ENCODE measurements at regions of chr7 and their contacts with region 1.

Region 1: DNA sequence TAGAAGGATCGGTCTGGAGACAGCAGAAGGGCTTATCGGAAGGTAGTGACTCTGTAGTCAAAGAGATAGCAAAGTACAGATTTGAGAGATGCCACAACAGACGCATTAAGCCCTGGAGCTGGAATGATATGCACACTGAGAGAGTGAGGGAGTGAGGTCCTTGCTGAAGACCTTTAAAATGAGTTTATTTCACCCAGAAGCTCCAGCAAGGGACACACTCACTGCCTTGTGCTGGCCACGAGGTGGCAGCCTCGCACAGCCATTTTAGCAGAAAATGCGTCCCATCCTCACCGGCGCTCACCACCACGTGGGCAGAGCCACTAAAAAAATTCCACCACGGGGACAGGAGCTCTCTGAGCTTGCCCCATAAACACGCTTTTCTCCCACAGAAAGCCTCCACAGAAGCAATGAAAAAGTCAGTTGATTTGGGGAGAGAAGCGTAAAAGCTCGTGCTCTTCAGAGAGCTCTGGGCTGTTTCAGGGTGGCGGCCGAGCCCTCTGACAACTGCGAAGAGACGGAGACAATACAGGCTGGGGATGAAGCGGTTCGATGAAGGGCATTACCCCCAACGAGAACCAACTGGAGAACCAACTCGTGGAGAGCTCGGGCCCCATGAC is 163.0 kb upstream of the KLF14 start:
- DNase-seq: no peak
- H3K4me3 ChIP-seq: no peak overlapping the region
- CTCF ChIP-seq: peak; percentile 88

Region 2: GRCh38 chr7:130758429-130759056 is 138.5 kb before region 1 on chr7:
- CTCF ChIA-PET with region 1: no interaction called
- POLR2A ChIA-PET with region 1: no interaction called
- DNase-seq: peak; percentile 14
- H3K4me3 ChIP-seq: no peak overlapping the region
- CTCF ChIP-seq: peak; percentile 32

Region 3: DNA sequence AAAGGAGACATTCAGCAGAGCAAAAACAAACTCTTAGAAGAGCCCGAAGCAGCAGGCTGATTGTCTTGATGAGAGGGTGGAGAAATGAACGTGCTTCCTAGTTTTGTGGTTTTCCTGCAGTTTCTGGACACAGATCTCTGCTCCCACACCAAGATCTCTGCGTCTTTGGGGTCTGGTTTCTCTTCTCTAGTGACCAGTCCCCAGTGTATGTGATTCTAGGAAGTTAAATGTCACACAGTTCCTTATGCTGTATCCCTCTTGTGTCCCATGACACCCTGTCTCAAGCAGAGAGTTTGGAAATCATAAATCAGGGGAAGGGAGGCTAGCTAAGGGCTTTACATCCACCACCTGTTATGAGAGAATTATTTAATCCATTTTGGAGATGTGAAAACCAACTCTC is 107.6 kb before region 1 on chr7:
- CTCF ChIA-PET with region 1: no interaction called
- POLR2A ChIA-PET with region 1: no interaction called
- DNase-seq: no peak
- H3K4me3 ChIP-seq: no peak overlapping the region
- CTCF ChIP-seq: no peak

Region 4: GRCh38 chr7:130884437-130885417 is 12.3 kb before region 1 on chr7:
- CTCF ChIA-PET with region 1: interaction called, 34 read pairs
- POLR2A ChIA-PET with region 1: interaction called, 3 read pairs
- DNase-seq: no peak
- H3K4me3 ChIP-seq: no peak overlapping the region
- CTCF ChIP-seq: no peak

Region 5: DNA sequence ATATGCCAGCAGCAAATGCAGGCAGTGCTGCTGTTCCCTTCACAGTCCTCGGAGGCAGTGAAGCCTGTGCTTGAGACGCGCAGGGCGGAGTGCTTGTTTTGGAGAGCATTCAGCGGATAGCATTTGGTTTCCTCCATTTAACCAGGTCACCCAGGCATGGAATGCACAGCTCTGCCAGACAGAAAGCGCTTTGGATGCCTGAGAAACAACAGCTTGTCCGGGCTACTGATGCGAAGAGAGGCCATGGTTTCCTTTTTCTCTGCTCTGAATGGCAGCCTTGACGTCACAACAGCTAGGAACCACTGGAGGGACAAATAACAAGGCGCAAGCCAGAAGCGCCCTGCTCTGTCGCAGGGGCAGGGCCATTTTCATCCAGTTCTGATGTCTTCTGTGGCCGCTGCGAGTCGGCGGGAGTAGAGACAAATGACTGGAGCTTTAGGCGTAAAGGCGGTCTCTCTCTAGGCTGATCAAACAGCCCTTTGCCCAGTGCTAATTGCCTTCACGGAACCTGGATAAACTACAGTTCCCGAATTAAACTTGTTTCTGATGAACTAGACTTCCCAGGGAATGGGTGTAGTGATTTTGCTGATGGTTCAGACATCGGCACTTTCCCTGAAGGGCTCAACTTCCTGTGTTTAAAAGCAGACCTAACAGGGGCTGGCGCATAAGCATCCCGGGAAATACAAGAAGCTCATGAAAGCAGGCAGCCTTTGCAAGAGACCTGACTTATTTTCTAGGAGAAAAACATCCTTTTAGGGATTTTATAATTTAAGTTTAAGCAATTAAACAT is 24.6 kb after region 1 on chr7:
- CTCF ChIA-PET with region 1: interaction called, 21 read pairs
- POLR2A ChIA-PET with region 1: no interaction called
- DNase-seq: no peak
- H3K4me3 ChIP-seq: peak overlapping the region; percentile 38
- CTCF ChIP-seq: no peak

Region 6: DNA sequence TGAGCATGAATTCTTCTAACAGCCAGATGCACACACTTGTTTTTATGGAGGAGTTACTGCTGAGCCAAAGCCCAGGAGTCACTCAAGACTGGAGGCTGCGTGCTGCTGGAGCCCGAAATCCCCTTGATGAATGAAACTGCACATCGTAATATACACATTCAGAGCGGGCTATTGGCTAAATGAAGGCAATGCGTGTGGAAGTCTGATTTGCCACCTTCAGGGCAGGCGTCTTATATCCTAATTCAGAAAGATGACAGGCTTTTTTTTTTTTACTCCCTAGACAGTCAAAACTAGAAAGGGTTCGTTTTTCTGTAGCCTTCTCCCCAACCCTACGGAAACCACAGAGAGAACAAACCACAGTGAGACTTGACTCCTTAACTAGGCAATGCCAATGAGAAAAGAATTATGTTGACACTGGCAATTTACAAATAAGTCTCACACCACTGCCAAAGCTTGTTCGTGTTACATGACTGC is 64.2 kb after region 1 on chr7:
- CTCF ChIA-PET with region 1: interaction called, 16 read pairs
- POLR2A ChIA-PET with region 1: interaction called, 10 read pairs
- DNase-seq: peak; percentile 57
- H3K4me3 ChIP-seq: peak overlapping the region; percentile 45
- CTCF ChIP-seq: no peak

Region 7: GRCh38 chr7:130988443-130988842 is 91.4 kb after region 1 on chr7:
- CTCF ChIA-PET with region 1: interaction called, 45 read pairs
- POLR2A ChIA-PET with region 1: no interaction called
- DNase-seq: no peak
- H3K4me3 ChIP-seq: no peak overlapping the region
- CTCF ChIP-seq: no peak

Region 8: DNA sequence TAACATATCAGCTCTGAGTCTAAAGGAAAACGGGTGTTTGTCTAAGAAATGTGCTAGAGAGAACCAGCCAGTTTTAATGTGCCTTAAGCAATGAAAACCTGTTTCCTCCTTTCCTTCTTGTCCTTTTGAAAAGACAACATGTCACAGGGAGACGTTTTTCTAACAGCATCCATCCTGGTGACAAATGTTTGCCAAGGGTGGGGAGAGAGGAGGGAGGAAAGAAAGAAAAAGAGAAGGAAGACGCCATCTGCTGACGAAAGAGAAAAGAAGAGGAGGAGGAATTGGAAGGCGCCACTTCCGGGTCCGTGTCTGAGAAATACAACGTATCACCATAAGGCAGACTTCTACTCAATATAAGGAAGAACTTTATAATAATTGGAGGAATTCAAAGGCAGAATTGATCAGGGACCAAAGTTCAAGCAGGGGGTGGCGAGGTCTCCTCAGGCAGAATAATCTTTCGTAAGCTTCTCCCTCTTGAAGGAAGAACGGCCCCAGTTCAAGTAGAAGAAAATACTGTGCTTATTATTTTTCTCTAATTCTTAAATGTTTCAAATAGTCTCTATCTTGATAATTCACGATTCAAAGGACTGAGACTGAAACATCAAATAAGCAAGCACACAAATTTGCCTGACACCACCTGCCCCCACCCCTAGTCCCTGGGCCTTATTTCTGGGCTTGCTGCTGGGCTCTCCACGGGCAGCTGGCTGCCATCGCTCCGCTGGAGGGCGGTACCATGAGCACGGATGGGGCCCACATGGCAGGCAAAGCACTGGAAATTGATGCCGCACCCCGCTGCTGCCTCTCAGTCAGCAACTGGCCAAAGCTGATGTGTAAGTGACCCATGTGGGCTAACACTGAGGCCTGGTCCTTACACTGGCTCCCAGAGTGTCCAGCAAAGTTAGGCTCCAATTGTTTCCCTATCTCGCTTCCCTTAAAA is 110.7 kb after region 1 on chr7:
- CTCF ChIA-PET with region 1: interaction called, 38 read pairs
- POLR2A ChIA-PET with region 1: no interaction called
- DNase-seq: no peak
- H3K4me3 ChIP-seq: no peak overlapping the region
- CTCF ChIP-seq: peak; percentile 50

Measured in AG04449 (cell line).